ENCODE measurements at regions of chr6 and their contacts with region 1.

Region 1: GRCh38 chr6:6547110-6547879 is 41.2 kb upstream of the LY86 start:
- H3K4me3 ChIP-seq: peak overlapping the region; percentile 26
- H3K27ac ChIP-seq: no peak overlapping the region
- H3K4me1 ChIP-seq: no peaks in the 10 kb centered on the region
- CTCF ChIP-seq: peak; percentile 56

Region 2: GRCh38 chr6:5471044-5471443 is 1076.3 kb before region 1 on chr6:
- CTCF ChIA-PET with region 1: interaction called, 10 read pairs
- POLR2A ChIA-PET with region 1: no interaction called
- H3K4me3 ChIP-seq: no peak overlapping the region
- H3K27ac ChIP-seq: no peak overlapping the region
- H3K4me1 ChIP-seq: peaks cover 11% of the 10 kb centered on the region
- CTCF ChIP-seq: peak; percentile 45; the same call in 1 of the 2 replicates

Region 3: GRCh38 chr6:6057424-6058053 is 489.8 kb before region 1 on chr6:
- CTCF ChIA-PET with region 1: interaction called, 42 read pairs
- POLR2A ChIA-PET with region 1: no interaction called
- H3K4me3 ChIP-seq: no peak overlapping the region
- H3K27ac ChIP-seq: no peak overlapping the region
- H3K4me1 ChIP-seq: no peaks in the 10 kb centered on the region
- CTCF ChIP-seq: 0 out of 2 replicates have a peak, but pooled peaks have one; percentile 15

Region 4: GRCh38 chr6:6221787-6222535 is 325.3 kb before region 1 on chr6:
- CTCF ChIA-PET with region 1: interaction called, 20 read pairs
- POLR2A ChIA-PET with region 1: no interaction called
- H3K4me3 ChIP-seq: no peak overlapping the region
- H3K27ac ChIP-seq: no peak overlapping the region
- H3K4me1 ChIP-seq: no peaks in the 10 kb centered on the region
- CTCF ChIP-seq: no peak

Region 5: GRCh38 chr6:6494677-6495076 is 52.6 kb before region 1 on chr6:
- CTCF ChIA-PET with region 1: interaction called, 15 read pairs
- POLR2A ChIA-PET with region 1: no interaction called
- H3K4me3 ChIP-seq: no peak overlapping the region
- H3K27ac ChIP-seq: no peak overlapping the region
- H3K4me1 ChIP-seq: no peaks in the 10 kb centered on the region
- CTCF ChIP-seq: no peak

Region 6: GRCh38 chr6:6534399-6534798 is 12.9 kb before region 1 on chr6:
- CTCF ChIA-PET with region 1: interaction called, 13 read pairs
- POLR2A ChIA-PET with region 1: no interaction called
- H3K4me3 ChIP-seq: no peak overlapping the region
- H3K27ac ChIP-seq: no peak overlapping the region
- H3K4me1 ChIP-seq: no peaks in the 10 kb centered on the region
- CTCF ChIP-seq: no peak

Measured in HEK293 (cell line).